ENCODE measurements at regions of chr1 and their contacts with region 1.

Region 1: DNA sequence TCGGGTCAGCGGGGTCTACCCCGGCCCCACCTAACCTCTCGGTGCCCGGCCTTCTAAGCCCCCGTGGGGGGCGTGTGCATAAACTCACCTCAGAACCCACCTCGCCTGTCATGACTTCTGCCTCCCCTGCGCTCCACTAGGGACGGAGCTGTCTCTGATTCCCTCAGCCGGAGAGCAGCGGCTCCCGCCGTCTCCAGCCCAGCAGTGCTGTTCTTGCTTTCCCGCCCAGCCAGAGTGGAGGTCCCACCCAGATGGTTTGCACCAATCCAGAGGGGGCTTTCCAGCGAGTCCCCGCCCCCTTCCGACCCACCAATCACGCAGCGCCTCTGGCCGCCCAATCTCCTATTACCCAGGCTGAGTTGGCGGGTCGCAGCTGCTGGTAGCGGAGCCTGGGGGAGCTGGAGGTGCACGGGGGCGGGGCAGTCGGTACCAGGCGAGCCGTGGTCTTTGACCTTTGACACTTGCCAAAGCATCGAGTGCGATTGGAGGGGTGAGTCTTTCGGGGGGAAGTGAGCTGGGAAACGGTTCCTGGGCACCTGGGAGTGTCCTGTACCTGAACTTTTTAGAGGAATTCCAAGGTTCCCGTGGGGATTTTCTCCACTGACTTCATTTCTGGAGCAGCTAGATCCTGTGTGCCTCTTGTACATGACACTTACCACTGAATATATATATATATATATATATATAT is at the start of gene CLSPN:
- DNase-seq: peak; percentile 88
- ATAC-seq: peak; percentile 94
- H3K4me3 Mint-ChIP-seq: peak within 1 kb of the TSS; percentile 99
- H3K27ac Mint-ChIP-seq: peak within 1 kb of the TSS; percentile 83
- H3K4me1 Mint-ChIP-seq: peaks cover 11% of the 10 kb centered on the region
- H3K27me3 Mint-ChIP-seq: no peaks in the 10 kb centered on the region
- CTCF ChIP-seq: no peak
- total RNA-seq, gene CLSPN: 3.9 and 4.9 TPM in 2 replicates

Region 2: DNA sequence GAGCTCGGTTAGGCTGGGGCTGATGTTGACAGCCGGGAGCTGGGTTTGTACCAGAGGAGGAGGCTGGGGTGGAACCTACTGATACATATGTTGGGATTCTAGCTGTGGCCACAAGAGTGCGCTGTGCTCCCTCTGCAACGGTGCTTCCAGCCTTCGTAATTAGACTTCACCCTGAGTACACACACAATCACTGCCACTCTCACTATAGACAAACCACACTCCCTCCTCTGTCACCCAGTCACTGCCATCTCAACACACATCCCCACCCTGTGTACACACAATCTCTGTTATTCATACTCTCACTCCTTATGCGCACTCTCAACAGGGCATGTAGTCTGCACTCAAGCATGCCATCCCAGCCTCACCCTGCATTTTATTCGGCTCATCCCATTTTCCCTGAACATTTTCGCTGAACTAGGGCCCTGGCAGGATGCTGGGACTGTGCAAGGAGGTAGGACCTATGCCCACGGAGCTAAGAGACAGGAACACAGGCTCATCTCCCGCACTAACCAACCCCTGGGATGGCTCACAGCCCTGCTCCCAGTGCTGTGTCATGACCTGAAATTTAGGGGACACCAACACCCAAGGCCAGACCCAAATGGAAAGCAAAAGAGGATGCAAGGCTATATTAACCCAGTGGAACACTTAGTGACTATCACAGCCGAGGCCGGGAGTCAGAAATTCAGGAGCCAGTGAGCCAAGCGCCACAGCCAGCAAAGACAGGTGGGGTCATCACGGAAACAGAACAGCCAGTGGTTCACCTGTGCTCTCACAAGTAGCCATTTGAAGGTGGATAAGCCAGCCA is 983.2 kb before region 1 on chr1:
- CTCF ChIA-PET with region 1: no interaction called
- POLR2A ChIA-PET with region 1: no interaction called
- intact Hi-C with region 1: no loop called
- DNase-seq: no peak
- ATAC-seq: peak; percentile 82
- H3K4me3 Mint-ChIP-seq: no peak overlapping the region
- H3K27ac Mint-ChIP-seq: no peak overlapping the region
- H3K4me1 Mint-ChIP-seq: peaks cover 7% of the 10 kb centered on the region
- H3K27me3 Mint-ChIP-seq: peaks cover 52% of the 10 kb centered on the region
- CTCF ChIP-seq: no peak

Region 3: GRCh38 chr1:34852677-34853217 is 917.2 kb before region 1 on chr1:
- CTCF ChIA-PET with region 1: no interaction called
- POLR2A ChIA-PET with region 1: no interaction called
- intact Hi-C with region 1: loop called (anchors 10 kb)
- DNase-seq: peak; percentile 69
- ATAC-seq: peak; percentile 100
- H3K4me3 Mint-ChIP-seq: no peak overlapping the region
- H3K27ac Mint-ChIP-seq: peak overlapping the region; percentile 46
- H3K4me1 Mint-ChIP-seq: peaks cover 14% of the 10 kb centered on the region
- H3K27me3 Mint-ChIP-seq: no peaks in the 10 kb centered on the region
- CTCF ChIP-seq: peak; percentile 91

Region 4: GRCh38 chr1:35451125-35451528 is 318.8 kb before region 1 on chr1:
- CTCF ChIA-PET with region 1: interaction called, 9 read pairs
- POLR2A ChIA-PET with region 1: interaction called, 9 read pairs
- intact Hi-C with region 1: loop called (anchors 1 kb)
- DNase-seq: peak; percentile 48
- ATAC-seq: peak; percentile 87
- H3K4me3 Mint-ChIP-seq: no peak overlapping the region
- H3K27ac Mint-ChIP-seq: no peak overlapping the region
- H3K4me1 Mint-ChIP-seq: no peaks in the 10 kb centered on the region
- H3K27me3 Mint-ChIP-seq: no peaks in the 10 kb centered on the region
- CTCF ChIP-seq: no peak

Region 5: GRCh38 chr1:35641233-35641866 is 128.6 kb before region 1 on chr1 and contains the start of gene PSMB2:
- CTCF ChIA-PET with region 1: no interaction called
- POLR2A ChIA-PET with region 1: interaction called, 4 read pairs
- intact Hi-C with region 1: loop called (anchors 1 kb)
- DNase-seq: peak; percentile 92
- ATAC-seq: peak; percentile 93
- H3K4me3 Mint-ChIP-seq: peak within 1 kb of the TSS; percentile 100
- H3K27ac Mint-ChIP-seq: peak within 1 kb of the TSS; percentile 99
- H3K4me1 Mint-ChIP-seq: peaks cover 40% of the 10 kb centered on the region
- H3K27me3 Mint-ChIP-seq: peaks cover 16% of the 10 kb centered on the region
- CTCF ChIP-seq: no peak
- total RNA-seq, gene PSMB2: 54.5 and 56.3 TPM in 2 replicates

Region 6: GRCh38 chr1:35726450-35727433 is 43.2 kb before region 1 on chr1:
- CTCF ChIA-PET with region 1: interaction called, 8 read pairs
- POLR2A ChIA-PET with region 1: no interaction called
- intact Hi-C with region 1: loop called (anchors 1 kb)
- DNase-seq: peak; percentile 32
- ATAC-seq: peak; percentile 92
- H3K4me3 Mint-ChIP-seq: no peak overlapping the region
- H3K27ac Mint-ChIP-seq: no peak overlapping the region
- H3K4me1 Mint-ChIP-seq: peaks cover 5% of the 10 kb centered on the region
- H3K27me3 Mint-ChIP-seq: no peaks in the 10 kb centered on the region
- CTCF ChIP-seq: no peak

Region 7: DNA sequence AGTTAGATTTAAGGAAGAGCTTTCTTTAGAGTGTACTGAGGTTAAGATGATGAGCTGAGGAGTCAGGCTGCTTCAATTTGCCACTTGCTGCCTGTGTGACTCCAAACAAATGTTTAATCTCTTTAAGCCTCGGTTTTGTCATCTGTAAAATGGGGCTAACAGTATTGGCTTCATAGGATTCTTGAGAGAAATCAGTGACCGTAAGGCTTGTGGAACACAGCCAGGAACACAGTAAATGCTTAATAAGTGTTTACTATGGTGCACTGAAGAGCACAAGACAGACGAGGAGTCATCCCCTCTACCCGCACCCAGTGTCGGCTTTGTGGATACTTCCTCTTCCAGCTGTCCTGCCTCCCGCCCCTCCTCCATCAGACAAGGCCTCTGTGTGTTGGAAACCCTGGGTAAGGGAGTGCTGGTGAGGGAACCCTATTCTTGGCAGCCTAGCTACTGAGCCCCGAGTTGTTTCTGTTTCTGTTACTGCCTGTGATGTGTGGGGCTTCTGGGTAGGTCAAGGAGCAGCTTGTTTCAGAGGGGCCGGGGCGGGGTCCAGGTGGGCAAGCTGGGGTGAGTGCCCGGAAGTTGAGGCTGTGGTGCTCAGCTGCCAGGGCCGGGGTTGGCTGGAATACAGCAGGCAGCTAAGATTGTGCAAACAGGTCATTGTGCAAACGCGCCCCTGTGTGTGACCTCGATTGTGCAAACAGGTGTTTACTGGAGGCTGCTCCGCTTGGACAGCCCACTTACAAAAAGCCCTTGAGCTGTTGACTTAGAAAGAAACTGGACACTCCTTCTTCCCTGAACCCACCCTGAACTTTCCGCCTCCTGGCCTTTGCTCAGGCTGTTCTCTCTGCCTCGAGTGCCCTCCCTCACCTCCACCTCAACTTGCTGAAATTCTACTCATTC is 716.8 kb after region 1 on chr1:
- CTCF ChIA-PET with region 1: no interaction called
- POLR2A ChIA-PET with region 1: no interaction called
- intact Hi-C with region 1: no loop called
- DNase-seq: no peak
- ATAC-seq: peak; percentile 77
- H3K4me3 Mint-ChIP-seq: peak overlapping the region; percentile 38
- H3K27ac Mint-ChIP-seq: peak overlapping the region; percentile 20
- H3K4me1 Mint-ChIP-seq: peaks cover 27% of the 10 kb centered on the region
- H3K27me3 Mint-ChIP-seq: peaks cover 2% of the 10 kb centered on the region
- CTCF ChIP-seq: no peak

Region 8: GRCh38 chr1:36737767-36738166 is 967.9 kb after region 1 on chr1:
- CTCF ChIA-PET with region 1: no interaction called
- POLR2A ChIA-PET with region 1: no interaction called
- intact Hi-C with region 1: no loop called
- DNase-seq: no peak
- ATAC-seq: no peak
- H3K4me3 Mint-ChIP-seq: no peak overlapping the region
- H3K27ac Mint-ChIP-seq: no peak overlapping the region
- H3K4me1 Mint-ChIP-seq: no peaks in the 10 kb centered on the region
- H3K27me3 Mint-ChIP-seq: peaks cover 37% of the 10 kb centered on the region
- CTCF ChIP-seq: no peak

Measured in activated B cell treated with CpG ODN at 0.5 μM for 24 hours (primary cell).